Endothelial cell of umbilical vein (primary cell): ENCODE measurements at regions of chr14 and their contacts with region 1.

Region 1: GRCh38 chr14:24965934-24966578 is 83.9 kb downstream of the STXBP6 start:
- DNase-seq: peak; percentile 29
- H3K4me3 ChIP-seq: no peak overlapping the region
- H3K27ac ChIP-seq: no peak overlapping the region
- H3K4me1 ChIP-seq: no peaks in the 10 kb centered on the region
- H3K27me3 ChIP-seq: peaks cover 0 to 2% of the 10 kb centered on the region in 2 experiments
- CTCF ChIP-seq: no peak
- POLR2A ChIP-seq: no peak

Region 2: GRCh38 chr14:24903337-24903736 is 62.7 kb before region 1 on chr14:
- CTCF ChIA-PET with region 1: no interaction called
- POLR2A ChIA-PET with region 1: no interaction called
- dilution Hi-C with region 1: no loop called
- intact Hi-C with region 1: loop called (anchors 1 kb)
- DNase-seq: peak; percentile 17
- H3K4me3 ChIP-seq: no peak overlapping the region
- H3K27ac ChIP-seq: no peak overlapping the region
- H3K4me1 ChIP-seq: no peaks in the 10 kb centered on the region
- H3K27me3 ChIP-seq: no peaks in the 10 kb centered on the region
- CTCF ChIP-seq: no peak
- POLR2A ChIP-seq: no peak